K562 (cell line): ENCODE measurements at regions of chr1 and their contacts with region 1.

Region 1: DNA sequence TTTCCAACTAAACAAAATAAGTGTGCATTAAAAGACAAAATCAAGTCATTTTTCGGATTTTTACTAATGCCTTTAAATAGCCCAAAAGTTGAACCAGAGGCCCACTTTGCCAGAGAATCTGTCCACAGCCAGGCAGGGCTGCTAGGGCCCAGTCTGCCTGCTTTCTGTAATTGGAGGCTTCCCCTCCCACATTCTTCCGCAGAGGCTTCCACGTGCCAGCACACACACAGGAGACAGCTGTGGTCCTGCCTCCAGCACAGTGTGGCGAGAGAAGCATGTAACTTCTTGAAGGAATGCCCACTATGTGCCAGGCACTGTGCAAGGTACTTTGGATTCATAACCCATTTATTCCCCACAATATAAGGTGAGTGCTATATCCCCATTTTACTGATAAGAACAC is 11.3 kb upstream of the PDZK1IP1 start:
- DNase-seq: no peak
- ATAC-seq: no peak
- H3K4me3 ChIP-seq: no peak overlapping the region
- H3K27ac ChIP-seq: no peak overlapping the region
- H3K4me1 ChIP-seq: peaks cover 2 to 5% of the 10 kb centered on the region in 2 experiments; a peak in 4 of 5 replicates
- H3K27me3 ChIP-seq: no peaks in the 10 kb centered on the region
- CTCF ChIP-seq: no peak
- EP300 ChIP-seq: no peak
- POLR2A ChIP-seq: no peak
- RAD21 ChIP-seq: no peak

Region 2: GRCh38 chr1:47211796-47212269 is 10.7 kb after region 1 on chr1:
- CTCF ChIA-PET with region 1: no interaction called
- POLR2A ChIA-PET with region 1: interaction called, 39 read pairs
- in situ Hi-C with region 1: no loop called
- intact Hi-C with region 1: no loop called
- DNase-seq: peak; percentile 58 to 82 (median 66)
- ATAC-seq: peak; percentile 59
- H3K4me3 ChIP-seq: no peak overlapping the region
- H3K27ac ChIP-seq: peak overlapping the region; percentile 55
- H3K4me1 ChIP-seq: peaks cover 49 to 57% of the 10 kb centered on the region in 2 experiments
- H3K27me3 ChIP-seq: no peaks in the 10 kb centered on the region
- CTCF ChIP-seq: no peak
- EP300 ChIP-seq: peak; percentile 69; the same call in 1 of the 2 replicates
- POLR2A ChIP-seq: peak; percentile 32; the same call in 1 of the 2 replicates
- RAD21 ChIP-seq: no peak

Region 3: DNA sequence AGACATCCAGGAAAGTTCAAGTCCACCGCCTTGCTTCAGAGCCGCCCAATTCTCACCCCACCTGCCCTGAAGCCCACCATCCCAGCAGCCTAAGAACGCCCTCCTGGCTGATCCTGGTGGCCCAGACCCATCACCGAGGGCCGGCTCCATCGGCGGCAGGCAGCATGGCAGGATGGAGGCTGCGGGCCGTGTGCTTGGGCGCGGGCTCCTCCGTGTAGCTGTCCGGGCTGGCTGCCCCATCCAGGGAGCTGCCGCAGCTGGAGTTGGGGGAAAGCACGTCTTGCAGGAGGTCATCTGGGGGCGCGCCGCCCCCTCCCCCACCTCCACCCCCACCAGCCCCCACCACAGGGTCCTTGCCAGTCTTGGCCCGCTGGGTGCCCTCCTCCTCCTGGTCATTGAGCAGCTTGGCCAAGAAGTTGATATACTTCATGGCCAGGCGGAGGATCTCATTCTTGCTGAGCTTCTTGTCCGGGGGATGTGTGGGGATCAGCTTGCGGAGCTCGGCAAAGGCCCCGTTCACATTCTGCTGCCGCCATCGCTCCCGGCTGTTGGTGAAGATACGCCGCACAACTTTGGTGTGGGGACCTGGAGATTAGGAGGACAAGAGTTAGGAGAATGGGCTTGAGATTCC is 18.5 kb after region 1 on chr1:
- CTCF ChIA-PET with region 1: no interaction called
- POLR2A ChIA-PET with region 1: interaction called, 10 read pairs
- in situ Hi-C with region 1: no loop called
- intact Hi-C with region 1: no loop called
- DNase-seq: no peak
- ATAC-seq: no peak
- H3K4me3 ChIP-seq: no peak overlapping the region
- H3K27ac ChIP-seq: no peak overlapping the region
- H3K4me1 ChIP-seq: peaks cover 10 to 16% of the 10 kb centered on the region in 2 experiments; a peak in 4 of 5 replicates
- H3K27me3 ChIP-seq: no peaks in the 10 kb centered on the region
- CTCF ChIP-seq: no peak
- EP300 ChIP-seq: no peak
- POLR2A ChIP-seq: no peak
- RAD21 ChIP-seq: no peak

Region 4: DNA sequence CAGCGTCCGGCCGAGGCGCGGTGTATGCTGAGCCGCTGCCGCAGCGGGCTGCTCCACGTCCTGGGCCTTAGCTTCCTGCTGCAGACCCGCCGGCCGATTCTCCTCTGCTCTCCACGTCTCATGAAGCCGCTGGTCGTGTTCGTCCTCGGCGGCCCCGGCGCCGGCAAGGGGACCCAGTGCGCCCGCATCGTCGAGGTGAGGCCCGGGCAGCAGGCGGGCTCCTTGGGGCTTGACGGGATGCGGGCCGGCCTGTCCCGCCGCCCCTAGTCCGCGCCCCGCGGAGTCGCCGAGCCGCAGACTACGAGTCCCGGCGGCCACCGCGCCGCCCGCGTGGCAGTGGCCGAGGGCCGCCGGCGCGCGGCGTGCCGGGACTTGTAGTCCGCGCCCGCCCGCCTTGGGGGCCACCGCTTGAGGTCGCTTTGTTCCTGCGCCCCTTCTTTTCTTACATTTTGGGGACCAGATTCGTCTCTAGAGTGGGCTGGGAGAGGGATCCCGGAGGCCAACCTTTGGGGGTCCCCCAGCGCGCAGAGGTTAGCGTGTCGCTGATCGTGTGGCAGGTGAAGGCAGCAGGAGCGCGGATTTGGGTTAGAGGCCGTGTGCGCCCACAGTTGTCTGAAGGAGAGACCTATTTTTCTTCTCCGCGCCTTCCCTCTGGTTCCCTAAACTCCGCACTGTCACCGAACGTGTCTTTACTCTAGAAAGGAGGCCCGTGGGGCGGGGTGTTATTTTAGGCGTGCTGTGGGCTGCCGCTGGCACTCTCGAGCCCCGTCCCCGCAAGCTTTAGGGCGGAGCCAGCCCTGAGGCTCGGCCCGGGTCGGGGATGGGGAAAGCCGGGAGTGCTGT is 133.0 kb after region 1 on chr1:
- CTCF ChIA-PET with region 1: no interaction called
- POLR2A ChIA-PET with region 1: no interaction called
- in situ Hi-C with region 1: no loop called
- intact Hi-C with region 1: no loop called
- DNase-seq: peak; percentile 85 to 93 (median 90)
- ATAC-seq: peak; percentile 88
- H3K4me3 ChIP-seq: peak overlapping the region; percentile 93
- H3K27ac ChIP-seq: peak overlapping the region; percentile 85
- H3K4me1 ChIP-seq: peaks cover 23 to 28% of the 10 kb centered on the region in 2 experiments; a peak in 4 of 5 replicates
- H3K27me3 ChIP-seq: no peaks in the 10 kb centered on the region
- CTCF ChIP-seq: peak; percentile 41 to 53 (median 51)
- EP300 ChIP-seq: no peak; the same call in 1 of the 2 replicates
- POLR2A ChIP-seq: peak; percentile 81
- RAD21 ChIP-seq: no peak